ENCODE measurements at regions of chr2 and their contacts with region 1.

Region 1: DNA sequence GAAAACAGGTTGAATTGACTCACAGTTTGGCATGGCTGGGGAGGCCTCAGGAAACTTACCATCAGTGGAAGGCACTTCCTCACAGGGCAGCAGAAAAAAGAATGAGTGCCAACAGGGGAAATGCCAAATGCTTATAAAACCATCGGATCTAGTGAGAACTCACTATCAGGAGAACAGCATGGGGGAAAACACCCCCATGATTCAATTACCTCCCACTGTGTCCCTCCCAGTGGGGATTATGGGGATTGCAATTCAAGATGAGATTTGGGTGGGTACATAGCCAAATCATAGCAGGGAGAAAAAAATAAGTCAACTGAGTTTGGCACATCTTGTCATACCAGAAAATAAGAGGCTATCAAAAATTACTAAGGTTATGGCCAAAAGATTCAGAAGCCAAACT is 96.3 kb downstream of the TRIP12 start:
- DNase-seq: no peak
- H3K4me3 Mint-ChIP-seq: no peak overlapping the region
- H3K27ac Mint-ChIP-seq: no peak overlapping the region
- H3K4me1 Mint-ChIP-seq: peaks cover 9% of the 10 kb centered on the region
- H3K27me3 Mint-ChIP-seq: no peaks in the 10 kb centered on the region
- CTCF ChIP-seq: no peak

Region 2: GRCh38 chr2:229861431-229861830 is 36.0 kb after region 1 on chr2:
- CTCF ChIA-PET with region 1: no interaction called
- intact Hi-C with region 1: loop called (anchors 2 kb)
- DNase-seq: no peak
- H3K4me3 Mint-ChIP-seq: no peak overlapping the region
- H3K27ac Mint-ChIP-seq: no peak overlapping the region
- H3K4me1 Mint-ChIP-seq: no peaks in the 10 kb centered on the region
- H3K27me3 Mint-ChIP-seq: no peaks in the 10 kb centered on the region
- CTCF ChIP-seq: no peak

Measured in Calu3 (cell line).